ENCODE measurements at regions of chr12 and their contacts with region 1.

Region 1: GRCh38 chr12:3299929-3300832 is 190.8 kb upstream of the PRMT8 start:
- DNase-seq: peak; percentile 88
- H3K27ac ChIP-seq: peak overlapping the region; percentile 90
- CTCF ChIP-seq: peak; percentile 63

Region 2: DNA sequence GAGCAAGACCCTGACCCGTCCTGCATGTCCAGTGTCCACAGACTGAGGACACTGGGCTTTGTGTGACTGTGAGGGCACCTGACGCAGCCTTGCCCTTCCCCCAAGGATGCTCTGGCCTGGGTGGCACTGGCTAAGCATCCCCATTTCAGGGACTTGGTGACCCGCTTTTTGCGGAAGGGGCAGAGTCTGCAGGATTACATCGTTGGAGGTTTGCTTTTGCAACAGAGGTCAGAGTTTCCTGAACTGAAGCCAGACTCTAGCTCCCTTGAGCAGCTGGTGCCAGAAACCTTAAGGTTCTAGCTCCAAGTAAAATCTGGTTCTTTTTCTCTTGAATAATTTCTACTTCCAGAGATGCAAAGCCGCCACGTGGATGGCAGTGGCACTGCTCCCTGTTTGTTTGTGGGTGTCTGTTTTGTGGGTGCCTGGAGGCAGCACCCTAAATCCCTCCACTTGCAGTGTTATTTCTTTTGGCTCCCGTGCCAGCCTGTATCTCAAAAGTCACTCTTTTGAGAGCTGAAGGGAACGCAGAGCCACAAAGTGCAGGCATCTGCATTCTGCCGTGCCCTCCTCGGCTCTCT is 38.3 kb before region 1 on chr12:
- CTCF ChIA-PET with region 1: no interaction called
- POLR2A ChIA-PET with region 1: no interaction called
- DNase-seq: no peak
- H3K27ac ChIP-seq: no peak overlapping the region
- CTCF ChIP-seq: no peak

Region 3: DNA sequence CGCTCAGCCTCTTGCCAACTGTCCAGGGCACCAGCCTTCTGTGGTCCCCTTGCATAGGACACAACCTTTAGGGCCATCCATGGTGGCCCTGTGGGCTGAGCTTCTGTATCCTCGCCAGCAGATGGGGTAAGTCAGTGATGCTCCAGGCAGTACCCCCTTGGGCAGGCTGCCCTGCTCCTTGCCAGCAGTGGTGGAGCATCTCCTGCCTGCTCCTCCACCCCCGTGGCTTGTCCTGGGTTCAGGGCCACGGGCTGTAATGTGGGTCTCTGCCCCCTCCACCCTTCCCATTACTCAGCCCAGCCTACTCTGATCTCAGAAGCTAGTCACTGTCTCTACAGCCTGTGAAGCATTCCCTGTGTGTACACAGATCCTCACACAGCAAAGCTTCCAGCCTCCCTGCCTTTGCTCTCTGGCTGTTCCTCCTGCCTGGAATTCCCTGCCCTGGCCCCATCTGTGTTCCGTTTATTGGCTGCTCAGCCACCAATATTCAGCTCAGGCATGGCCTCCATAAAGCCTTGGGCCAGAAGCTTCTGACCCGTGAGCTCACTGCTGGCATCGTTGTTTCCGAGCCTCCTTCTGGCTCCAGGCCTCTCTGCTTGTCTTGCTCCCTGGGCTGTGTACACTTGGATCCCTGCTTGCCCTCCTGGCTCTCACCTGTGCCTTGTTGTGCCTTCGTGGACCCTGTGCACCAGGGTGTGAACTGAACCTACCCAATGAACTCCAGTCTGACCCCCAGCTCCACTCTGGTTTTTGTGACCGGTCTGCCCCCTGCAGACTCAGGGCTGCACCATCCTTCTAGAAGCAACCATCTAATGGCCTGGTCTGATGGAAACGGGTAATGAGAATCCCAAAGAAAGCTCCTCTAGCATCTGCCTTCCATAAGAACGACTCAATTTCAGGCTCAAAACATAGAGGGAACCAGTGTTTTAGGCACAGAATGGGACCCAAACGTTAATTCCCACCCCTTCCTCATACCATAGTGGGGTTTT is 13.8 kb after region 1 on chr12:
- CTCF ChIA-PET with region 1: interaction called, 24 read pairs
- POLR2A ChIA-PET with region 1: no interaction called
- DNase-seq: peak; percentile 17
- H3K27ac ChIP-seq: no peak overlapping the region
- CTCF ChIP-seq: no peak

Region 4: DNA sequence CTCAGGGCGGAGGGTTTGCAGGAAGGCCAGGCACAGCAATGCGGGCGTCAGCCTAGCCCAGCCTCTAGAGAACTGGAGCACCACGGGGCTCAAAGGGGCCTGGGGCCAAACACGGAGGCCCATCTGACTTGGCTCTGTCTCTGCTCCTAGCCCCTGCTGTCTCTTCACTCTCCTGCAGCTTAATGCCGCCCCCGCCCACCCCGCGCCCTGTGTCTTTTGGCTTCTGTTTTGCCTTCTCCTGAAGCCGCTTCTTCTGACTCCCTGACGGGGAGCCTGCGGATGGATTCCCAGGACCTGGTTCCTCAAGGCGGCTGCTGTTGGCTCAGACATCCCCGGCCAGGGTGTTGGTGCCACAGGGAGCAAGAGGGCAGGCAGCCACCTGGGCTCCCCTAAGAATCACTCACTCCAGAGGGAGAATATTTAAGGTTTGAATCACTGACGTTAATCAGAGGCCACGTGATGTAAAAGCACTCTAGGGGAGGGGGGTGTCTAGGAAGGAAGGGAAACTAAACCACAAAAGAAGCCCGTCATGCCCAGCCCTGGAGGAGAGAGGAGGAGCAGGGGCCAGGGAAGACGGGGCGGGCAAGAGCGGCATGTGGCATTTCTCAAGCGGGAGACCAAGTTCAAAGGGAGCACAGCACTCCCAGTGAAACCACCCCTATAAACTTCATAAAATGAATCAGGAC is 154.0 kb after region 1 on chr12:
- CTCF ChIA-PET with region 1: interaction called, 13 read pairs
- POLR2A ChIA-PET with region 1: no interaction called
- DNase-seq: peak; percentile 95
- H3K27ac ChIP-seq: peak overlapping the region; percentile 89
- CTCF ChIP-seq: no peak

Region 5: DNA sequence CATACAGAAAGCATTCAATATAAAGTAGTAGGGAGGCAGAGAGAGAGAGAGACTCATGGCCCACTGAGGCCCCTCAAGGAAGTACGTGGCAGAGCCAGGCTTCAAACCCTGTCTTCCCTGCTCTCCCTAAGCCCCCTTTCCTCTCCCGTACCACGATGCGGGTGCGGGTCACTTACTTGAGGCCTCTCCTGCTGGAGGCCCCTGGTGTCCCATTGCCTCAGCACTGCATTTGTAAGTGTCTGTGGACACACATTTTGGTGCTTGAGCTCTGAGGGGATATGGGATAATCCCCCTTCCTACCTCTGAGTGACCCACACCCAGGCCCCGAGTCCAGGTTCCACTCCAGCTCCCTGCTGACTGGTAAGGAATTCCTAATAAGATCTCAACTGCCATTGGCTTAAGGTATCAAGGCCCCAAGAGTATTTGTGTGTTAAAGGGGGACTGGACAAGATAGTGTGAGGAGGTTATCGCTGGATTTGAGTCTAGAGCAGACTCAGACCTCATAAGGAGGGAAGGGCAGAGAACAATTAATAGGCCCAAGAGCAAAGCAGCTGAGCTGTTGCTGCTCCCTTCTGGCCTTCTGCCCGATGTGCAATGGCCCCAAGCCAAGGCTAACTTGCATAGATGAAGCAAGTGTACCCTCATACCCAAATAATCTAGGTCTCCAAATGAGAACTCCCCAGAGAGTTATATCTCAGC is 380.9 kb after region 1 on chr12:
- CTCF ChIA-PET with region 1: interaction called, 11 read pairs
- POLR2A ChIA-PET with region 1: no interaction called
- DNase-seq: no peak
- H3K27ac ChIP-seq: no peak overlapping the region
- CTCF ChIP-seq: no peak

Region 6: GRCh38 chr12:3803865-3804472 is 503.8 kb after region 1 on chr12:
- CTCF ChIA-PET with region 1: interaction called, 33 read pairs
- POLR2A ChIA-PET with region 1: no interaction called
- DNase-seq: peak; percentile 30
- H3K27ac ChIP-seq: no peak overlapping the region
- CTCF ChIP-seq: peak; percentile 72

Measured in RWPE1 (cell line).